ENCODE measurements at regions of chr3 and their contacts with region 1.

Region 1: GRCh38 chr3:48847504-48848423 is at the start of gene PRKAR2A:
- DNase-seq: peak; percentile 67 to 93 (median 83)
- ATAC-seq: peak; percentile 75
- H3K4me3 ChIP-seq: peak within 1 kb of the TSS; percentile 68 to 72
- H3K4me3 Mint-ChIP-seq: peak within 1 kb of the TSS; percentile 86
- H3K27ac ChIP-seq: peak within 1 kb of the TSS; percentile 40 to 90
- H3K27ac Mint-ChIP-seq: peak within 1 kb of the TSS; percentile 97
- H3K4me1 ChIP-seq: peaks cover 26% of the 10 kb centered on the region
- H3K4me1 Mint-ChIP-seq: peaks cover 31% of the 10 kb centered on the region
- H3K27me3 ChIP-seq: no peaks in the 10 kb centered on the region
- H3K27me3 Mint-ChIP-seq: no peaks in the 10 kb centered on the region
- CTCF ChIP-seq: no peak
- total RNA-seq, gene PRKAR2A: 75.2 to 75.6 TPM

Region 2: GRCh38 chr3:48784426-48785120 is 63.2 kb before region 1 on chr3:
- CTCF ChIA-PET with region 1: no interaction called
- POLR2A ChIA-PET with region 1: no interaction called
- intact Hi-C with region 1: loop called (anchors 5 to 10 kb)
- DNase-seq: no peak
- ATAC-seq: no peak
- H3K4me3 ChIP-seq: no peak overlapping the region
- H3K4me3 Mint-ChIP-seq: no peak overlapping the region
- H3K27ac ChIP-seq: no peak overlapping the region
- H3K27ac Mint-ChIP-seq: no peak overlapping the region
- H3K4me1 ChIP-seq: peaks cover 9% of the 10 kb centered on the region
- H3K4me1 Mint-ChIP-seq: peaks cover 12% of the 10 kb centered on the region
- H3K27me3 ChIP-seq: no peaks in the 10 kb centered on the region
- H3K27me3 Mint-ChIP-seq: no peaks in the 10 kb centered on the region
- CTCF ChIP-seq: no peak

Region 3: DNA sequence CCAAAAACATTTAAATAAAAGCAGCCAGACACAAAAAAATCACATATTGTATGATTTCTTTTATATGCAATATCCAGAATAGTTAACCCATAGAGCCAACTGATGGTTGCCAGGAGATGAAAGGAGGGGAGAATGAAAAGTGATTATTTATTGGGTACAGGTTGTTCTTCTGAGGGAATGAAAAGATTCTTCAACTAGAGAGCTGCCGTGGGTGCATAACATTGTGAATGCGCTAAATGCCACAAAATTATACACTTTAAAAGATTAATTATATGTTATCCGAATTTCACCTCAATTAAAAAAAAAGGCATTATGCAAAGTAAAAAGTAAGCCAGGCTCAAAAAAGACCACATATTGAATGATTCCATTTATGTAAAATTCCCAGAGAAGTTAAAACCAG is 36.2 kb before region 1 on chr3:
- CTCF ChIA-PET with region 1: no interaction called
- POLR2A ChIA-PET with region 1: no interaction called
- intact Hi-C with region 1: loop called (anchors 1 kb)
- DNase-seq: no peak
- ATAC-seq: no peak
- H3K4me3 ChIP-seq: no peak overlapping the region
- H3K4me3 Mint-ChIP-seq: no peak overlapping the region
- H3K27ac ChIP-seq: peak overlapping the region; percentile 15 to 89
- H3K27ac Mint-ChIP-seq: peak overlapping the region; percentile 23
- H3K4me1 ChIP-seq: peaks cover 14% of the 10 kb centered on the region
- H3K4me1 Mint-ChIP-seq: peaks cover 35% of the 10 kb centered on the region
- H3K27me3 ChIP-seq: no peaks in the 10 kb centered on the region
- H3K27me3 Mint-ChIP-seq: no peaks in the 10 kb centered on the region
- CTCF ChIP-seq: no peak

Measured in CD8-positive, alpha-beta T cell (primary cell).